Right cardiac atrium (tissue), 5 donors: ENCODE measurements at regions of chr12 and their contacts with region 1.

Region 1: GRCh38 chr12:22088886-22089285 is 42.9 kb downstream of the CMAS start:
- DNase-seq: no peak
- ATAC-seq: no peak
- H3K4me3 ChIP-seq: no peak overlapping the region
- H3K27ac ChIP-seq: no peak overlapping the region
- H3K4me1 ChIP-seq: no peaks in the 10 kb centered on the region
- H3K27me3 ChIP-seq: no peaks in the 10 kb centered on the region

Region 2: DNA sequence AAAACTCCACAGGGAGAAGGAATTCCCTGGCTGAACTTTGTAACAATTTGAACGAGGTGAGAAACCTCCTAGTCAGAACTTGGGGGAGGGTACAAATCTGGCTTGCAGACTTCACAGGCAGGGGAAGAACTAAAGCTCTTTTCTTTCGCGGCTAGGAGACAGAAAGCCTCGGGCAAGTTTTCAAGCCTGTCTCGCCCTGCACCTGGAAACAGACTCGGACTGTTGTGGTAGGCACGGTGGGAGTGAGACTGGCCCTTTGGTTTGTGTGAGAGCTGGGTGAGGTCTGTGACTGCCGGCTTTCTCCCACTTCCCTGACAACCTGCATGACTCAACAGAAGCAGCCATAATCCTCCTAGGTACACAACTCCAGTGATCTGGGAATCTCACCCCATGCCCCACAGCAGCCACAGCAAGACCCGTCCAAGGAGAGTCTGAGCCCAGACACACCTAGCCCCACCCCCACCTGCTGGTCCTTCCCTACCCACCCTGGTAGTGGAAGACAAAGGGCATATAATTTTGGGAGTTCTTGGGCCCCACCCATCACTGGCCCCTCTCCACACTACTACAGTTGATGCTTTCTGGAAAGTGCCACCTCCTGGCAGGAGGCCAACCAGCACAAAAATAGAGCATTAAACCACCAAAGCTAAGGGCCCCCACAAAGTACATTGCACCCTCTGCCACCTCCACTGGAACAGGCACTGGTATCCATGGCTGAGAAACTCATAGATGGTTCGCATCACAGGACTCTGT is 348.3 kb after region 1 on chr12:
- intact Hi-C with region 1: loop called (anchors 5 kb)
- DNase-seq: peak in 1 of 3 donors; percentile 20
- ATAC-seq: no peak
- H3K4me3 ChIP-seq: no peak overlapping the region
- H3K27ac ChIP-seq: no peak overlapping the region
- H3K4me1 ChIP-seq: peaks cover 1% of the 10 kb centered on the region
- H3K27me3 ChIP-seq: no peaks in the 10 kb centered on the region